ENCODE measurements at regions of chr19 and their contacts with region 1.

Region 1: GRCh38 chr19:17658666-17659065 is 29.5 kb downstream of the UNC13A start:
- DNase-seq: no peak
- H3K4me3 ChIP-seq: no peak overlapping the region
- H3K27ac ChIP-seq: no peak overlapping the region
- H3K4me1 ChIP-seq: no peaks in the 10 kb centered on the region
- H3K27me3 ChIP-seq: no peaks in the 10 kb centered on the region
- CTCF ChIP-seq: no peak

Region 2: DNA sequence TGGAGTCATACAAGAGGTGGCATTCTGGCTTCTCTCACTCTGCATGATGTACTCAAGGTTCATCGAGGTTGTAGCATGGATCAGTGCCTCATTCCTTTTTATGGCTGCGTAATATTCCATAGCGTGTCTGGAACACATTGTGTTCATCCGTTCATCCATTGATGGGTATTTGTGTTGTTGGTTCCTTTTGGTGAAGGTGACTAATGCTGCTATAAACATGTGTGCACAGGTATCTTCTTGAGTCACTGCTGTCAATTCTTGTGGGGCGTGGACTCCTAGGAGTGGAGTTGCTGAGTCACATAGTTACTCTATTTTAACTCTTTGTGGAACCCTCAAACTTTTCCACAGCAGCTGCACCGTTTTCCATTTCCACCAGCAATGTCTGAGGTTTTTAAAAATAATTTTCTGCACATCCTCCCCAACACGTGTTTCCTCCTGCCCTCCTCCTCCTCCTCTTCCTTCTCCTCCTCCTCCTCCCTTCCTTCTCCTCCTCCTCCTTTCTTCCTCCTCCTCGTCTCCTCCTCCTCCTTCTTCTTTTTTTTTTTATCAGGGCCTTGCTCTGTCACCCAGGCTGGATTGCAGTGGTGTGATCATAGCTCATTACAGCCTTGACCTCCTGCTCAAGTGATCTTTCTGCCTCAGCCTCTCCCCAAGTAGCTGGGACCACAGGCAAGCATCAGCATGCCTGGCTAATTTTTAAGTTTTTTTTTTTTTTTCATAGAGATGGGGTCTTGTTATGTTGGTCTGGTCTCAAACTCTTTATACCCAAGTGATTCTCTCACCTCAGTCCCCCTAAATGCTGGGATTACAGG is 208.2 kb before region 1 on chr19:
- CTCF ChIA-PET with region 1: interaction called, 10 read pairs
- POLR2A ChIA-PET with region 1: no interaction called
- intact Hi-C with region 1: no loop called
- DNase-seq: no peak
- H3K4me3 ChIP-seq: no peak overlapping the region
- H3K27ac ChIP-seq: no peak overlapping the region
- H3K4me1 ChIP-seq: peaks cover 5% of the 10 kb centered on the region
- H3K27me3 ChIP-seq: peaks cover 29% of the 10 kb centered on the region
- CTCF ChIP-seq: no peak

Measured in A673 (cell line).